ENCODE measurements at regions of chr14 and their contacts with region 1.

Region 1: DNA sequence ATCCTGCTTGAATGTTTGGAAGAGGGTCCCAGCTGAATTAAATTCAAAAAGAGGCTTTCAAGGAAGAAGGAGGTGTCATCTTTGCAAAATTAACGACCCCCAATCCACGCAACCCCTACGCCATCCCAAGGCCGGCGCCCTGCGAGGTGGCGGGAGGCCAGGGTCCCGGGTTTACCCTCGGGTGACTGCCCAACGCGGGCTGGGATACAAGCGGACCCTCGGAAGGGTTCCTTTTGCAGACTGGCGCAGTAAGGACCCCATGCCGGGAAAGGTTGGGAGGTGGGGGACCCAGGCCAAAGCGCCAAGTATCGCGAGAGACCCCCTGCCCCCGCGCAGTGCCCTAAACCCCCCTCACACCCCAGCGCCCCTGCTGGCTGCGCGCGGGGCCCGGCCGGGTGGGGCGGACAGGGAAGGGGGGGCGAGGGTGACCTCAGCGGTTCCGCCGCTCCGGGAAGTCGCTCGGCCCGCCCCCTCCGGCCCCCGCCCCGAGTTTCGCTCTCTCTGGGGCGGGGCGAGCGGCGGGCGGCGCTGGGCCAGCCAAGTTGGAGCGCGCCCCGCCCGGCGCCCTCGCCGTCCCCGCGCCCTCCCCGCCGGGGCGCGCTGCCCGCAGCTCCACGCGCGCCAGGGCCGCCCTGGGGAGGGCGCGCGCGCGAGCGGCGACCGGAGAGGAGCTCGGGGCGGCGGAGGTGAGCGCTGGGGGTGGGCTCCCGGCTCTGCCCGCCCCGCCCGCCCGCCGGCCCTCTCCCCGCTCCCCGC is 708 bp upstream of the ZBTB42 start:
- DNase-seq: peak; percentile 76
- ATAC-seq: peak; percentile 25
- H3K4me3 ChIP-seq: peak overlapping the region; percentile 82 to 92 (median 90)
- H3K27ac ChIP-seq: peak overlapping the region; percentile 74
- H3K4me1 ChIP-seq: peaks cover 67% of the 10 kb centered on the region
- H3K27me3 ChIP-seq: no peaks in the 10 kb centered on the region
- CTCF ChIP-seq: peak; percentile 64
- EP300 ChIP-seq: 0 out of 4 replicates have a peak, but pooled peaks of 1 of the 2 experiments have one; percentile 34
- POLR2A ChIP-seq: no peak
- RAD21 ChIP-seq: no peak

Region 2: DNA sequence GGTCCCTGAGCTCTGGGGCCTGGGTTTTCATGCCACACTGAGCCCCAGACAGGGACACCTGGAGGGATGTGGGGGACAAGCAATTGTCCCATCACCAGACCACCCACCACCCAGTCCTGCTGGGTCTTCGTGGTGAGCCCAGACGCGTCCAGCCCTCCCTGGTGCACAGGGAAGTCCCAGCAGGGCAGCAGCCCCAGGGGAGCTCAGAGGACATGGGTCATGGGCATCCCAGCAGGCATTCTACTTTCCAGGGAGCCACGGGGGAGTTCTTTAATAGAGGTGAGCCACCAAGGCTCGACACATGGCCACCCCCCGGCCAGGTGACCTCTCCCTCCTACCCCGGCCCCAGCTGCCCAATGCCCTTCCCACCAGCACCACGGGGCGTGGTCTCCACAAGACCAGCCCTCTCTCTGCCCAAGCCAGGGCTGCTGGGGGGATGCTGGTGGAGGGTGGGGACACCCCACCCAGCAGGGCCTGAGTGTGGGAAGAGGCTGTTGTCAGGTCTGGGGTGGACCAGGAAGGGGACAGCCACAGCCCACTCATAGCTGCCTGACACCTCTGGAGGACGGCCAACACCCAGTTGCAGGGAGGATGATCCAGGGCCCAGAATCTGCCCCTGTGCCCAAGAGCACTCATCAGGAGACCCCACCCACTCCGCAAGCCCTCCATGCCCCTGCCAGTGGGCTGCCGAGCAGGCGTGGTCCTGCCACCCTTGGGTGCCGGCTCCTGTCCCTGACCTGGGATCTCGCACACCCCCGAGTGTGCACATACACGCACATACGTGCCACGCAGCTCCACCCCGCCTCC is 18.7 kb before region 1 on chr14:
- CTCF ChIA-PET with region 1: no interaction called
- POLR2A ChIA-PET with region 1: no interaction called
- in situ Hi-C with region 1: no loop called
- intact Hi-C with region 1: loop called (anchors 2 kb)
- DNase-seq: no peak
- ATAC-seq: no peak
- H3K4me3 ChIP-seq: no peak overlapping the region
- H3K27ac ChIP-seq: no peak overlapping the region
- H3K4me1 ChIP-seq: no peaks in the 10 kb centered on the region
- H3K27me3 ChIP-seq: no peaks in the 10 kb centered on the region
- CTCF ChIP-seq: no peak
- EP300 ChIP-seq: no peak
- POLR2A ChIP-seq: no peak
- RAD21 ChIP-seq: no peak

Region 3: GRCh38 chr14:104820669-104821228 is 20.6 kb after region 1 on chr14:
- CTCF ChIA-PET with region 1: no interaction called
- POLR2A ChIA-PET with region 1: interaction called, 8 read pairs
- in situ Hi-C with region 1: no loop called
- intact Hi-C with region 1: loop called (anchors 2 kb)
- DNase-seq: peak; percentile 81
- ATAC-seq: peak; percentile 90
- H3K4me3 ChIP-seq: peak overlapping the region; percentile 27 to 68 (median 41); a peak in 5 of 6 replicates
- H3K27ac ChIP-seq: no peak overlapping the region
- H3K4me1 ChIP-seq: peaks cover 42% of the 10 kb centered on the region
- H3K27me3 ChIP-seq: no peaks in the 10 kb centered on the region
- CTCF ChIP-seq: peak; percentile 94
- EP300 ChIP-seq: peak in 1 of 2 experiments; percentile 85; a peak in 1 of 4 replicates
- POLR2A ChIP-seq: peak in 1 of 2 experiments; percentile 32; a peak in 1 of 4 replicates
- RAD21 ChIP-seq: peak; percentile 88

Region 4: DNA sequence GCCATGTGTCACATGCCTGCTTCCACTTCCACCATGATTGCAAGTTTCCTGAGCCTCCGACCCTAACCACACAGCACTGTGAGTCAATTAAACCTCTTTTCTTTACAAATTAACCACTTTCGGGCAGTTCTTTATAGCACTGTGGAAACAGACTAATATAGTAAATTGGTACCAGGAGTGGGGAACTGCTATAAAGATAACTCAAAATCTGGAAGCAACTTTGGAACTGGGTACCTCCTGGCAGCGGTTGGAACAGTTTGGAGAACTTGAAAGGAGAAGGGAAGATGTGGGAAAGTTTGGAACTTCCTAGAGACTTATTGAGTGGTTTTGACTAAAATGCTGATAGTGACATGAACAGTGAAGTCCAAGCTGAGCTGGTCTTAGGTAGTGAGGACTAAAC is 1162.3 kb after region 1 on chr14:
- CTCF ChIA-PET with region 1: no interaction called
- POLR2A ChIA-PET with region 1: no interaction called
- in situ Hi-C with region 1: no loop called
- intact Hi-C with region 1: no loop called
- DNase-seq: no peak
- ATAC-seq: no peak
- H3K4me3 ChIP-seq: no peak overlapping the region
- H3K27ac ChIP-seq: no peak overlapping the region
- H3K4me1 ChIP-seq: no peaks in the 10 kb centered on the region
- H3K27me3 ChIP-seq: no peaks in the 10 kb centered on the region
- CTCF ChIP-seq: no peak
- EP300 ChIP-seq: no peak
- POLR2A ChIP-seq: no peak
- RAD21 ChIP-seq: no peak

Measured in HepG2 (cell line).